Caco-2 (cell line): ENCODE measurements at regions of chr1 and their contacts with region 1.

Region 1: DNA sequence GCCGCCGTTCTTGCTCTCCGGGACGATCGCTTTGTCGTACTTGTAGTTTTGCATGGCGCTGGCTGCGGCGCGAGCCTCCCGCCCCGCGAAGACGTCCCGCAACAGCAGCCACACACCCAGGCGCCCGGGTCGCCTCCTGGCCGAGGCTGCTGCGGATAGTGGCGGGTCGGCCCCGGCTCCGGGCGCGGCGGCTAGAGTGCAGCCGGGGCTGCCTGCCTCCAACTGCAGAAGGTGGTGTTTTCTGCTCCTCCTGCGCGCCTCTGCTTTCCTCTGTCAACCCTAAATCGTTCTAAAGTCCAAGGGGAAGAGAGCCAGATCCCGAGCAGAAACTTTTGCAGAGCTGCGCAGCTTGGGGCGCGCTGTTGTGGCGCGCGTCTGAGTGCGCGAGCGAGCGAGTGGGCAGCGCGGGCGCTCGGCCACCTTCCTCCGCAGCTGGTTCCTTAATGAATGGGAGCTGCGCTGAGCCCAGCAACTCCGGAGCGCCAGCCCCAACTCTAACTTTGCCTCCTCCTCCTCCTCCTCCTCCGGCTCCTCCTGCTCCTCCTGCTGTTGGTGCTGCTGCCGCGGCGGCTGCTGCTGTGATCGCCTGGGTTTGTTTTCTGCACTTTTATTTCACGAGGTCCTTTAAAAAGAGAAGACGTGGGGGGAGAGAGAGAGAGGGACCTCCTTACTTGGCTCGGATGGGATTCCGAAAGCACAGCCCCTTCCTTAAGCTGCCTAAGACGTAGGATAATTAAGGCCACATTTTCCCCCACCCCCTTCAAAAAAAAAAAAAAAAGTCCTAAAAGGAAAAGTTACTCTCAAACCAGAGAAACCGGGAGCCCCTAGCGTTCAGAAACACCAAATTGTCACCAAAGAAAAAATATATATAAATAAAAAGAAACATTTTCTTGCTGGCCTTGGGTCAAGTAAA is at the start of gene PLPP3:
- DNase-seq: peak; percentile 80 to 85
- H3K4me3 ChIP-seq: peak within 1 kb of the TSS; percentile 76
- H3K4me3 Mint-ChIP-seq: peak within 1 kb of the TSS; percentile 94
- H3K27ac Mint-ChIP-seq: peak within 1 kb of the TSS; percentile 97
- H3K4me1 ChIP-seq: peaks cover 24% of the 10 kb centered on the region
- H3K4me1 Mint-ChIP-seq: peaks cover 11% of the 10 kb centered on the region
- H3K27me3 ChIP-seq: no peaks in the 10 kb centered on the region
- H3K27me3 Mint-ChIP-seq: no peaks in the 10 kb centered on the region
- CTCF ChIP-seq: peak; percentile 8 to 51
- total RNA-seq, gene PLPP3: 39.2 and 41.0 TPM in 2 replicates

Region 2: DNA sequence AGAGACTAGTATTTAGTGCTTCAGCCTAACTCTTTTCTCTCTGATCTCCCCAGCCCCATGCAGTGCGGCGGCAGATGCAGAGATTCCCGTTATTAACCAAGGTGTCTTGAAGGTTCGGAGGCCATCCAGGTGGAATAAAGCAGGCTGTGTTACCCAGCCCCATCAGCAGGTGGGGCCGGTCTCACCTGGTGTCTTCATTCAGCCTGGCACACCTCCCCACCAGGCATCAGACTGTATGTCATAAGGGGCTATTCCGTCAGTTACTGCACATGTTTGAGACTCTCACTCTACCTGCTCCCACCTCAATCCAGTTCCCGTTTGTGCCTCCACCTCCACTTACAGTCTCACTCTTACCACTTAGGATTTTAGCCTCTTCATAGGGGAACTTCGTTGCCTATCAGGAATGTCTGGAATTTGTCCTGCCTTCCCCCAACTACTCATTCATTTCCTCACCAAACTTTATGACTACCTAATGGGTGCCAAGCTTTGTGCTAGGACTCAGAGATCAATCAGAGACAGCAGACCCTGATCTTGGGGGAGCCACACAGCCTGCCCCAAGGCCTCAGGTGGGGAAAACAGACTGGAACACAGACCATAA is 170.0 kb before region 1 on chr1:
- CTCF ChIA-PET with region 1: no interaction called
- POLR2A ChIA-PET with region 1: no interaction called
- intact Hi-C with region 1: loop called (anchors 2 kb)
- DNase-seq: peak; percentile 59 to 63
- H3K4me3 ChIP-seq: no peak overlapping the region
- H3K4me3 Mint-ChIP-seq: no peak overlapping the region
- H3K27ac Mint-ChIP-seq: no peak overlapping the region
- H3K4me1 ChIP-seq: peaks cover 28% of the 10 kb centered on the region
- H3K4me1 Mint-ChIP-seq: peaks cover 14% of the 10 kb centered on the region
- H3K27me3 ChIP-seq: no peaks in the 10 kb centered on the region
- H3K27me3 Mint-ChIP-seq: no peaks in the 10 kb centered on the region
- CTCF ChIP-seq: peak; percentile 51 to 54

Region 3: GRCh38 chr1:56434740-56435139 is 144.5 kb before region 1 on chr1:
- CTCF ChIA-PET with region 1: no interaction called
- POLR2A ChIA-PET with region 1: no interaction called
- intact Hi-C with region 1: loop called (anchors 5 kb)
- DNase-seq: peak in 1 of 2 experiments; percentile 36
- H3K4me3 ChIP-seq: no peak overlapping the region
- H3K4me3 Mint-ChIP-seq: peak overlapping the region; percentile 25
- H3K27ac Mint-ChIP-seq: peak overlapping the region; percentile 92
- H3K4me1 ChIP-seq: peaks cover 70% of the 10 kb centered on the region
- H3K4me1 Mint-ChIP-seq: peaks cover 62% of the 10 kb centered on the region
- H3K27me3 ChIP-seq: no peaks in the 10 kb centered on the region
- H3K27me3 Mint-ChIP-seq: no peaks in the 10 kb centered on the region
- CTCF ChIP-seq: no peak

Region 4: GRCh38 chr1:56463376-56463775 is 115.8 kb before region 1 on chr1:
- CTCF ChIA-PET with region 1: no interaction called
- POLR2A ChIA-PET with region 1: no interaction called
- intact Hi-C with region 1: no loop called
- DNase-seq: no peak
- H3K4me3 ChIP-seq: no peak overlapping the region
- H3K4me3 Mint-ChIP-seq: no peak overlapping the region
- H3K27ac Mint-ChIP-seq: peak overlapping the region; percentile 30
- H3K4me1 ChIP-seq: no peaks in the 10 kb centered on the region
- H3K4me1 Mint-ChIP-seq: peaks cover 6% of the 10 kb centered on the region
- H3K27me3 ChIP-seq: no peaks in the 10 kb centered on the region
- H3K27me3 Mint-ChIP-seq: no peaks in the 10 kb centered on the region
- CTCF ChIP-seq: no peak

Region 5: GRCh38 chr1:56516539-56517252 is 62.5 kb before region 1 on chr1:
- CTCF ChIA-PET with region 1: interaction called, 3 read pairs
- POLR2A ChIA-PET with region 1: no interaction called
- intact Hi-C with region 1: loop called (anchors 10 kb)
- DNase-seq: peak; percentile 62 to 70
- H3K4me3 ChIP-seq: no peak overlapping the region
- H3K4me3 Mint-ChIP-seq: peak overlapping the region; percentile 47
- H3K27ac Mint-ChIP-seq: peak overlapping the region; percentile 42
- H3K4me1 ChIP-seq: peaks cover 39% of the 10 kb centered on the region
- H3K4me1 Mint-ChIP-seq: peaks cover 33% of the 10 kb centered on the region
- H3K27me3 ChIP-seq: no peaks in the 10 kb centered on the region
- H3K27me3 Mint-ChIP-seq: no peaks in the 10 kb centered on the region
- CTCF ChIP-seq: no peak

Region 6: GRCh38 chr1:56745231-56745630 is 166.0 kb after region 1 on chr1:
- CTCF ChIA-PET with region 1: no interaction called
- POLR2A ChIA-PET with region 1: no interaction called
- intact Hi-C with region 1: no loop called
- DNase-seq: no peak
- H3K4me3 ChIP-seq: no peak overlapping the region
- H3K4me3 Mint-ChIP-seq: no peak overlapping the region
- H3K27ac Mint-ChIP-seq: no peak overlapping the region
- H3K4me1 ChIP-seq: no peaks in the 10 kb centered on the region
- H3K4me1 Mint-ChIP-seq: peaks cover 11% of the 10 kb centered on the region
- H3K27me3 ChIP-seq: no peaks in the 10 kb centered on the region
- H3K27me3 Mint-ChIP-seq: no peaks in the 10 kb centered on the region
- CTCF ChIP-seq: no peak